AG04449 (cell line): ENCODE measurements at regions of chr1 and their contacts with region 1.

Region 1: DNA sequence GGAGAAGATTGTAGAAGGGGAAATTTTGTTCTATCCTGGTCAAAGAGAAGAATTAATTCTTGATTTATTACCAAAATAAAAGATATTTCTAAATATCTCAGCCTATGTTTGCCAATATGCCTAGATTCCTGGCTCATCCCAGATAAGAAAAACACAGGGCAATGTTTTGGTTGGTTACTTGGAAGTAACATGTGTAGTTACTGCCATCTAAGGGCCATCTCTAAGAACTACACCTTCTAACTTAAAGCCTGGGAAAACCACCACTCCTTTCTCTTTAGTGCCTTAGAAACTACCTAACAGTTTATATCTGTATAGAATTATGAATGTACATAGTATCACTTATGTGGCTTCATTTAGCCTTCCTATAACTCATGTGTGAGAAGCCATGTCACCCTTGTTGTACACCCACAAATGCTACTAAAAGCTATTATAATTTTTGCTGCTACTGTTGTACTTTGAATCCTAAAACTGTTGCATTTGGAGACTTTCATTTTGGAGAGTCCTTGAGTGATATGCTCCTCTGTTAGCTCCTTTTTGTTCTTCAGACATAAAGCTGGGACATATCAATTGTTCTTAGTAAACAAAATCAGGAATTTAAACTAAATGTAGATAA is 4.5 kb downstream of the AIM2 start:
- DNase-seq: peak; percentile 36
- H3K4me3 ChIP-seq: no peak overlapping the region
- CTCF ChIP-seq: peak; percentile 44

Region 2: DNA sequence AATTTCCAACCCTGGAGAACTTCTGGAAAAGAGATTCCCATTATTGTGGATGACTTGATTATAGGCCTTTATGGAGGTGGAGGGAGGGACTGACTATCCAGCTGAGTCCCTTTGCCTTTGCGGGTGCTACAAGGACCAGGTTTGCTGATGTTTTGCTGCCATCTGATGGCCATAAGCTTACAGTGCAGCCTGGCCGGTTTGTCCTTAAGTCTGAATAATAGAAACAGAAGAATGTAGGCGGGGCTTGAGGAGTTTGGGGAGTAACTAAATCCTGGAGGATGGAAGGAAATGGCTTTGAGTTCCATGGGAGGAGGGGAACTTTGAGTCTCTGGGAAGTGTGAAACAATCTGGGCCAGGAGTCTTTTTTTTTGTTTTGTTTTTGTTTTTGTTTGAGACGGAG is 947.1 kb before region 1 on chr1:
- CTCF ChIA-PET with region 1: interaction called, 12 read pairs
- POLR2A ChIA-PET with region 1: no interaction called
- DNase-seq: peak; percentile 71
- H3K4me3 ChIP-seq: no peak overlapping the region
- CTCF ChIP-seq: peak; percentile 87

Region 3: DNA sequence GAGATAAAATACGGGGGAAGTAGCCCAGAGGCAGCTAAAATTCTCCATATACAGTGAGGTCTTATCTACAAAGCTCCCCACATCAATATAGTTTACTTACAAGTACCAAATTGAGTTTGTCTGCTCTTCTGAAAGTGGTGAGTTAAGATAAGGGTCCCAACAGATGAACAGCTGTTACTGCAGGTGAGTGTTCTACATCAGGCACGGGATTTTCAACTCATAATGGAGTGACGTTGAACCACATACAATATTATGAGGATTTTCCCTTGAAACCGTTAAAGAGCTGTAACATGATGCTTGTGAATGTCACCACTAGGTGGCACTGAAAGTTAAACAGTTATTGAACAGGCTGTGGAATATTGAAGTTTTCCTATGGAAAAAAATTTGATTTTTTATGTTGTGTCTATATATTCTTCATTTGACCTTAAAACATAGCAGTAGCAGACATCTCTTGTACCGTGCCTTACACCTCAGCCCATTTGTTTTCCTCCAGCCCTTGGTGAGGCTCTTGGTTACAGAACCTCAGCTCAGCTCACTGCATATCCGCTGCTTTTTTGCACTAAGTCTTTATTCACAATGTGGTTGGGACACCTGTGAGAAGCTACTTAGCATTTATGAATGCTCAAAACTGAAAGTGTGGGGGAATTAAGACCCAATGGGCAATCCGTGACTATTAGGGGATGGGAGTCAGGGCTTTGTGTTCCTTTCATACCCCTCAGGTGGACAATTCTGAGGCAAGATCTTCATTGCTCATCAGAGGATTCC is 868.2 kb before region 1 on chr1:
- CTCF ChIA-PET with region 1: interaction called, 80 read pairs
- POLR2A ChIA-PET with region 1: no interaction called
- DNase-seq: peak; percentile 14
- H3K4me3 ChIP-seq: no peak overlapping the region
- CTCF ChIP-seq: peak; percentile 54

Region 4: GRCh38 chr1:158998781-158999161 is 73.3 kb before region 1 on chr1:
- CTCF ChIA-PET with region 1: interaction called, 24 read pairs
- POLR2A ChIA-PET with region 1: no interaction called
- DNase-seq: no peak
- H3K4me3 ChIP-seq: peak overlapping the region; percentile 69
- CTCF ChIP-seq: peak; percentile 51

Region 5: GRCh38 chr1:159030877-159031447 is 41.1 kb before region 1 on chr1:
- CTCF ChIA-PET with region 1: interaction called, 10 read pairs
- POLR2A ChIA-PET with region 1: no interaction called
- DNase-seq: no peak
- H3K4me3 ChIP-seq: no peak overlapping the region
- CTCF ChIP-seq: no peak

Region 6: DNA sequence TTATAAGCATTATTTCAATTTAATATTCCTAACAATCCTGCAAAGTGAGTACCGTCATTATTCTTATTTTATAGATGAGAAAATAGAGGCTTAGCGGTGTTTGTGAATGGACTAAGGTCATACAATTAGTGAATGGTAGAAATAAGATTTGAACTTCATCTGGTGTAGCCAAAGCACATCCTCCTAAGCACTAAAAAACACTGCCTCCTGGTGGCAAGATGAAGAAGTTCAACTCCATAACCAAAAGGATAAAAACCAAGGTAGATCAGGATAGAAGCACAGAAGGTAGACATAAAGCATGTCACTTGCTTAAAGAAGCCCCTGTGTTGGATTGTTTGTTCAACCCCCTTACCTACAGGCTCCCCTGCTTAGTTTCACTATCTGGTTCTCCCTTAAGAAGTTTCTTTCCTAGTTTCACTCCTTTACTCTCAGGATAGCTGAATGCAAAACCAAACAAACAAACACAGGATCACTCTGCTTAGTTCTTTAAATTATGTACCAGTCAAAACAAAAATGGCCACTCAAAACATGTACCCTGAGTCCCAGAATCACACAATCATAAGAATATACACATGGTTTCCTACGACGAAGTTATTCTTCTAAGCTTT is 17.2 kb after region 1 on chr1:
- CTCF ChIA-PET with region 1: interaction called, 26 read pairs
- POLR2A ChIA-PET with region 1: no interaction called
- DNase-seq: no peak
- H3K4me3 ChIP-seq: no peak overlapping the region
- CTCF ChIP-seq: no peak

Region 7: DNA sequence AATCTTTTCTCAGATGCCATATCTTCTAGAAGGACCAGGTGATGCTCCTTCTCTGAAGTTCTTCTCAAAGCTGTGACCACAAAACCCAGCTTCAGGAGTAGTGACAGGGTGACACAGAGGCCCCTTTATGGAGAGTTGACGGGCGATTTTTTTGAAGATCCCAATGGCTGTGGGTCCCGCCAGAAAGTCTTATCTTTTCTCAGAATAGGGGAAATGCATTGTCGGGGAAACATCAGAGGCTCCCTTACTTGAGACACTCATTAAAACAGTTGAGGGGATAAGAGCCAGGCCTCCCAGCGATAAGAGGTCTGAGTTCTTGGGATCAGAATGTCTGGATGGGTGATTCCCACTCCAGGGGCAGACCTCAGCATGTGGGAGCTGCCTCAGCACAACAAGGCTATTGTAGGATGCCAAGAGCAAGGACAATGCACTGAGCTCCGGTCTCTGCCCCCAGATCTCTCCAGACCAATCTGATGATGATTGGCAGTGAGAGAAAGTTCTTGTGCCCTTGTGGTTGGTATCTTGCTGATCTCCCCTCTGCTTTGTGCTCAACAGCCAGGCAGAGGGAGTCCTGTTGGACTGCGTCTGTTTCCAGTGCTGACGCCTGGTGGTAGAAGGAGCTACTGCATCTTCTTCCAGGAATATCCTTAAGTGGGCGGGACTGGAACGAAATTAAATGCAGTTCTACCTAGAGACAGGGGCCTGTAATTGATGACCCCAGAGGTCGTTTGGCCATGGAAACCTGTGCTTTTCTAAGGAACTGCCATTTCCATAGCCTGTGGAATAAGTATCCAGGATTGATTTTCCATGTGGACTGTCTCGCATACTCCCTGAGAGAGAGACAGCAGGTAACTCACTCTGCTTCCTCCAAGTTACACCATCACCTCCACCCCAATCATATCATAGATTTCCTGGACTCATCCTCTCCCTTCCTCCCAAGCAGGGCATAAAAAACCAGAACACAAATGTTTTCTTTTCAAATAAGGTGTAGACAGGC is 125.8 kb after region 1 on chr1:
- CTCF ChIA-PET with region 1: no interaction called
- POLR2A ChIA-PET with region 1: no interaction called
- DNase-seq: peak; percentile 12
- H3K4me3 ChIP-seq: no peak overlapping the region
- CTCF ChIP-seq: peak; percentile 91

Region 8: DNA sequence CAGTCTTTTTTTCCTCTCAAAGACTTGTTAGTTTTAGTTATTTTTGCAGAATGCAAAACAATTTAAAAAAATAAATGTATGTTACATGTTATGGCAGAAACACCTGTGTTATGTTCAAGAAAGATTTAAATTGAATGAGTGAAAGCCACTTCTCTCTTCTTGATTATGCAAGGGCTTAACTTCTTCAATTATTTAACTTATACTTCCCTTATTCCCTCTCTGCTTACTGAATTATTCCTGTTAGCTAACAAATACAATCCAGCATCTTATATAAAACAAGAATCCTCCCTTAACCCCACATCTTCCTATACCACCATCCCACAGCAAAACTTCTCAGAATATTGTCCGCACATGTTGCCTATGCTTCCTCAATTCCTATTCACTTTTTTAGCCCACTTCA is 219.3 kb after region 1 on chr1:
- CTCF ChIA-PET with region 1: no interaction called
- POLR2A ChIA-PET with region 1: no interaction called
- DNase-seq: no peak
- H3K4me3 ChIP-seq: no peak overlapping the region
- CTCF ChIP-seq: no peak

Region 9: GRCh38 chr1:159429074-159429861 is 357.2 kb after region 1 on chr1:
- CTCF ChIA-PET with region 1: no interaction called
- POLR2A ChIA-PET with region 1: no interaction called
- DNase-seq: peak; percentile 91
- H3K4me3 ChIP-seq: no peak overlapping the region; the same call in 1 of the 2 replicates
- CTCF ChIP-seq: no peak

Region 10: DNA sequence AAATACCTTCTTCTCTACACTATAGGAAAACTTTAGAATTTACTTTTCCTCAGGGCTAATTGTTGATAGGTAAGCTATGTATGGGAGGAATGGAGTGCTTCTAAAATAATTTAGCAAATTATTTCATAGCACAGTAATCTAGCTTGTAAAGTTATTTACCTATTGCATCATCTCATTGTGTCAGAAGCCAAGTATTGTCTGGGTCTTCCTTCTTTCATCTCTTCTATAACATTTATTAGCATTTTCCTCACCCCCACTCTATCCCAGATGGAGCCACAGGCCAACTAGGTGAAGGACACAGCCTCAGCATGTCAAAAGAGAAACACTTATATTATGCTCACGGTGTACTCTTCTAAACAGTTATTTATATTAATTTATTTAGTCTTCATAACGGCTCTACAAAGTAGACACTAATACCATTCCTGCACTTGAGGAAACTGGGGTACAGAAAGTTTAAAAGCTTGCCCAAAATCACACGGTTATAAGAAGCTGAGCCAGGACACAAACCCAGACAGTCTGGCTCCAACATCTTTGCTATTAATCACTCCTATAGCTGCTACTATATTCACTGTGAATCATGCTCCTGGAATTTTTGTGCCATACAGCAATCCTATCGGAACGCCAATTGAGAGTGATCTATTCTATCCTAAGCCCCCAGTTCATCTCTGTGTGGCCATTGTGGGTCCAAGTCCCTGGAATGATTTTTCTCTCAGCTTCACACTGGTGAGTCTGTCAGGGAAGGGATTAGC is 420.7 kb after region 1 on chr1:
- CTCF ChIA-PET with region 1: no interaction called
- POLR2A ChIA-PET with region 1: no interaction called
- DNase-seq: peak; percentile 10
- H3K4me3 ChIP-seq: no peak overlapping the region
- CTCF ChIP-seq: no peak